MCF 10A (cell line): ENCODE measurements at regions of chr17 and their contacts with region 1.

Region 1: DNA sequence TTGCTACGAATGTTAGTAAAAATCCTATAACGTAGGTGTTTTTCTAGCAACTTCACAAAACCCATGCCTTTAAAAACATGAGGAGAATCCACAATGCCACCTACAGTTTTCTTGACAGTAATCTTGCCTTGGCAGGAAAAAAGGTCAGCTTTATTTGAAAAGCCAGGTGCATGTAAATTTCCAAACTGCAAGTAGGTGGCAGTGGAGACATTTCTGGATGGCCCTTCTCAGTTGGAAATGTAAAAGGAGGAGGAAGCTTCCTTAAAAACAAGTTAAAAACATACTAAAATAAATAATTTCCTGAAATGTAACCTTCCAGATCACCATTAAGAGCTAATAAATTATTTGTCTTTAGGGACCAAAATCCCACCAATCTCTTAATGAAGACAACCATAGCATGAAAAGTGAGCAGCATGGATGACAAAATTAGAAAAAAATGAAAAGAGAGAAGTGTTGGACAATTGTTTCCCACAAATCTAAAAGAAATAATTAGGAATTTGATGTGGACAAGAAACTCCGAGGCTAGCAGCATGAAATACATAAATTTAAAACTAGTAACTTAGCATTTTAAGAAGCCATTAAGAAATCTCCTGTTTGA is 152.2 kb downstream of the SNX11 start:
- DNase-seq: peak; percentile 52
- H3K4me3 Mint-ChIP-seq: no peak overlapping the region
- H3K27ac Mint-ChIP-seq: no peak overlapping the region
- H3K4me1 Mint-ChIP-seq: no peaks in the 10 kb centered on the region
- H3K27me3 Mint-ChIP-seq: peaks cover 53% of the 10 kb centered on the region
- CTCF ChIP-seq: peak; percentile 39

Region 2: DNA sequence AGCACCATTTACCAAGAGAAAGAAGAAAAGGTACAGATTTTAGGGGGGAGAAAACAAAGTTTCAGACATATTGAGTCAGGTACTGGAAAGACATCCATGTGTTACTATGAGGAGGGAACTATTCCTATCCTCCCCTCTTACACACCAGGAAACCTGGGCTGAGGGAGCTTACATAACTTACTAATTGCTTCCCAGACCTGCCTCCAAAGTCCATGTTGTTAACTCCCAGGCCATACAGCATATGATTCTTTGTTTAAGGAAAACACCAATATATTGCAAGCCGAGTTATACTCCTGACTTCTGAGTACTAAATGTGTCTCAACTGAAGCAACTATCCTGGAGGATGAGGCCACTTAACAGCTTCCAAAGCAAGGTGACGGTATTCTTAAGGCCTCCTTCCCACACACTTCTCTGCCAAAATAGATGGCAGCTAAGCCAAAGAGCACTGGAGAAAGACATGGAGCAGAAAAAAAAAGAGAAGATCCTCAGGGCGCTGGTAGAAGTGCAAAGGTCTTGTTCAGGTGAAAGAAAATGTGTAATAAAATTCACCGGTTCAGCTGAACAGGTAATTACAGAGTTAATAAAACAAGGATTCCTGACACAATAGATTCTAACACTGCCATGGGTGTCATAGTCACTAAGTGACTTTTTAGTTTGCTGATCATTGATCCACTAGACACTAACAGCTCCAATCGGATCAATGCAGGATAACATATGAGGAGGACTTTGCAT is 19.1 kb after region 1 on chr17:
- CTCF ChIA-PET with region 1: interaction called, 10 read pairs
- POLR2A ChIA-PET with region 1: no interaction called
- intact Hi-C with region 1: no loop called
- DNase-seq: no peak
- H3K4me3 Mint-ChIP-seq: no peak overlapping the region
- H3K27ac Mint-ChIP-seq: no peak overlapping the region
- H3K4me1 Mint-ChIP-seq: no peaks in the 10 kb centered on the region
- H3K27me3 Mint-ChIP-seq: peaks cover 88% of the 10 kb centered on the region
- CTCF ChIP-seq: no peak